Natural killer cell (primary cell): ENCODE measurements at regions of chr21 and their contacts with region 1.

Region 1: DNA sequence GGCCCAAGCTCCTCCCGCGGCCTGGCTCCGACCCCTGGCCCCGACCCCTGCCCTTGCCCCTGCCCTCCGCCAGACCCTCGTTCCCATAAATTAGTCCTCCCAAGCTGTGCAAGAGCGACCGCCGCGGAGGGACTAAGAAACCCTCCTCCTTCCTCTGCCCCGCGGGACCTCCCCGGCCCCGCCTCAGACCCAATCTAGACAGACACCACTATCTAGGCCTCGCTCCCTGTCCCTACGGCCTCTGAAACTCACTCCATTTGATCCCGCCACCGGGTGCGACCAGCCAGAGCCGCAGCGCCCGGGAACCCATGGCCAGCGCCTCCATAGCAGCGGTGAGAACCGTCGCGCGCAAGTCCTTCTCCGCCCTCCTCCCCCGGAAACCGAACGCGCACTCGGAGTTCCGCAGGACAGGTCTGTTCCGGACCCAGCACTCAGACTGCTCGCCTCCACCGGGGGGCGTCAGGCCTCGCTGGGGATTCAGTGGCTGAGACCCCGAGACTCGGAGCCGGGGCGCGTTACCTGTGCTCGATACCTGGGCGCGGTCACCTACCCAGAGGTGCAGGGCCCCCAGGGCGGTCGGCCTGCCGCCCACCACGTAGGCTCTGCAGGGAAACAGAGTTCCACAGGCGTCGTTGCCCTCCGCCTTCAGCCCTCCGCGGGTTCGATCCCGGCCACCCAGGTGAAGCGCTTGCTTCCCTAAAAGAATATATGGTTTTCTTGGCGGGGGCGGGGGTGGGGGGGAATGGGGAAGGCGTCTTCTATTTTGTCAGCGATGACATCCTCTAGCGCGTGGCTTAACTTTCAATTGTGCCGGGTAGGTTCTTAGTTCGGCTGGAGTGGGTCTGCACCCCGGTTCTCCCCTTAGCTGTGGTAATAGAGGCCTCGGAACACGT is at the start of gene MRPL39:
- DNase-seq: peak; percentile 81 to 91
- ATAC-seq: peak; percentile 91 to 94 (median 91)
- H3K4me3 ChIP-seq: peak within 1 kb of the TSS; percentile 95
- H3K4me3 Mint-ChIP-seq: peak within 1 kb of the TSS; percentile 98
- H3K27ac ChIP-seq: peak within 1 kb of the TSS; percentile 84
- H3K27ac Mint-ChIP-seq: peak within 1 kb of the TSS; percentile 91 to 97
- H3K4me1 ChIP-seq: peaks cover 23% of the 10 kb centered on the region
- H3K4me1 Mint-ChIP-seq: peaks cover 23 to 37% of the 10 kb centered on the region in 2 donors
- H3K27me3 ChIP-seq: no peaks in the 10 kb centered on the region
- H3K27me3 Mint-ChIP-seq: no peaks in the 10 kb centered on the region
- CTCF ChIP-seq: no peak
- total RNA-seq, gene MRPL39: 10.8 to 12.8 (median 10.8) TPM

Region 2: GRCh38 chr21:25561668-25562641 is 45.4 kb before region 1 on chr21:
- intact Hi-C with region 1: loop called (anchors 5 kb)
- DNase-seq: peak; percentile 67 to 82
- ATAC-seq: peak; percentile 68 to 81 (median 77)
- H3K4me3 ChIP-seq: peak overlapping the region; percentile 52
- H3K4me3 Mint-ChIP-seq: peak overlapping the region; percentile 97
- H3K27ac ChIP-seq: peak overlapping the region; percentile 52
- H3K27ac Mint-ChIP-seq: peak overlapping the region; percentile 83 to 84
- H3K4me1 ChIP-seq: peaks cover 28% of the 10 kb centered on the region
- H3K4me1 Mint-ChIP-seq: peaks cover 45 to 46% of the 10 kb centered on the region in 2 donors
- H3K27me3 ChIP-seq: no peaks in the 10 kb centered on the region
- H3K27me3 Mint-ChIP-seq: no peaks in the 10 kb centered on the region
- CTCF ChIP-seq: no peak

Region 3: DNA sequence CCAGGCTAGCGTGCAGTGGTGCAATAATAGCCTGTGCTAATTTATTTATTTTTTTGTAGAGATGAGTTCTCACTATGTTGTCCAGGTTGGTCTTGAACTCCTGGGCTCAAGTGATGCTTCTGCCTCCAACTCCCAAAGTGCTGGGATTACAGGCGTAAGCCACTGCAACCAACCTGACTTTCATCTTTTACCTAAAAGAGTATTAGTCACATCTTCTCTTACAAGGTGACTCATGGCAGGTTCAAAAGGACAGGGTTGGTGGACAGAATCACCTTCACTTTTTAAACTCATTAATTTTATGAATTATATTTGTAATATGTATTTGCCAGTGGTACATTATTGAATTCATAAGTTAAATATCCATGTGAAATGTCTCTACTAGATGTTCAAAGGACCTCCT is 49.7 kb after region 1 on chr21:
- intact Hi-C with region 1: no loop called
- DNase-seq: no peak
- ATAC-seq: no peak
- H3K4me3 ChIP-seq: no peak overlapping the region
- H3K4me3 Mint-ChIP-seq: no peak overlapping the region
- H3K27ac ChIP-seq: no peak overlapping the region
- H3K27ac Mint-ChIP-seq: no peak overlapping the region
- H3K4me1 ChIP-seq: no peaks in the 10 kb centered on the region
- H3K4me1 Mint-ChIP-seq: no peaks in the 10 kb centered on the region
- H3K27me3 ChIP-seq: no peaks in the 10 kb centered on the region
- H3K27me3 Mint-ChIP-seq: peaks cover 6 to 8% of the 10 kb centered on the region in 2 donors
- CTCF ChIP-seq: no peak

Region 4: DNA sequence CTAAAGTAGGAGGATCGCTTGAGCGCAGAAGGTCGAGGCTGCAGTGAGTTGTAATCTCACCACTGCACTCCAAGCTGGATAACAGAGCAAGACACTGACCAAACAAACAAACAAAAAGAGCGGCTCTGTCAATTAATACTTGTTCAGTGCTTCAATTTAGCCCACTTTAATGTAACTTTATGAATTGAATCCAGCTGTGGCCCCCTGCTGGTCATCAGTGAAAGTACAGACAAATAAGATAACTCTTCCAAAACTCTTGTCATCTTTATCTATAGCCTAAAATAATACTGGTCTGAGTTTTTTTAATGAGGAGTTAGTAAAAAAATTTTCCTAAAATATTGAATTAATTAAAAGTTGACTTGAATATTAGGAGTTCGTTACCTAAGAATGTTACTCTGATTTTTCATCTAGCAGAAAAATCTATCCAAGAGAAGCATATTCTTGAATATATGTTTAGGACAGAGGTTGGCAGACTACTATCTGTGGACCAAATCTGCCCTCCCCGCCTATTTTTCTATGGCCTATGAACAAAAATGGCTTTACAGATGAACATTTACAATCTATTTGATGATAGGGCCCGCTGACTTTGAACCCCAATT is 101.2 kb after region 1 on chr21:
- intact Hi-C with region 1: loop called (anchors 1 kb)
- DNase-seq: peak; percentile 20 to 78
- ATAC-seq: peak in 2 of 3 donors; percentile 60 to 61
- H3K4me3 ChIP-seq: no peak overlapping the region
- H3K4me3 Mint-ChIP-seq: no peak overlapping the region
- H3K27ac ChIP-seq: no peak overlapping the region
- H3K27ac Mint-ChIP-seq: no peak overlapping the region
- H3K4me1 ChIP-seq: no peaks in the 10 kb centered on the region
- H3K4me1 Mint-ChIP-seq: no peaks in the 10 kb centered on the region
- H3K27me3 ChIP-seq: no peaks in the 10 kb centered on the region
- H3K27me3 Mint-ChIP-seq: no peaks in the 10 kb centered on the region
- CTCF ChIP-seq: peak; percentile 96

Region 5: DNA sequence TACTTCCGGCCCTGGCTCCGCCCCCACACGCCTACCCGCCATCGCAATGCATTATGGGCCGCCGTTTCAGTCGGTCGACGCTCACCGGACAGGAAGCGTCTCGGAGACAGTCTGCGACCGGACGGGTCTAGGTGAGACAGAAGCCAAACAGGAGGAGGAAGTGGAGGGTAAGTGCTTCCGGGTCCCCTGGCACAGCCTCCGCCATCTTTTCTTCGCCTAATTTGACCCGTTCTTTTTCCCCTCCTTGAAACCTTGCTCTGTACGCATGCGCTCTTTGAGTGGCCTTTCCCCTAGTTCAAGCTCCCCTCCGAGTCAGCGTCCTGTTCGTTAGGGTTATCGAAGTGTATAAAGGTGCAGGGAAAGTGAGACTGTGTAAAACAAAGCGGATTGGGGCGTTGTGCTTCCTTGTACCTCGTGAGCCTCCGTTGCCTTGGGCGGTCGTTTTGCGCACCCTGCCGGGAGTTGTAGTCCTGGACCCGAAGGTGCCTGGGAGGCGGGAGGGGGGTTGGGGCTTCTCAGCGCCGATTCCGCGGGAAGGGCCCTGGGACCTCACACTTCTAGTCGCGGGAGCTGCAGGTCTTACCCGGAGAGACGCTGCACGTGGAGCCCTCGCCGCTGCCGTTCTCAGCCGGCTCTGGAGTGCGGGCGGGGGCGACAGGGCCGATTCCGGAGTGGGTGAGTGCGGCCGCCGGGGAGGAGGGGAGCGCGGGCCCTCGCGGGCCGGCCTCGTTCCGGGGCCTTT is 127.7 kb after region 1 on chr21 and contains the starts of genes ATP5PF and GABPA:
- intact Hi-C with region 1: loop called (anchors 1 kb)
- DNase-seq: peak; percentile 98 to 99
- ATAC-seq: peak; percentile 86 to 98 (median 89)
- H3K4me3 ChIP-seq: peak within 1 kb of the TSS; percentile 79
- H3K4me3 Mint-ChIP-seq: peak within 1 kb of the TSS; percentile 100
- H3K27ac ChIP-seq: peak within 1 kb of the TSS; percentile 92
- H3K27ac Mint-ChIP-seq: peak within 1 kb of the TSS; percentile 93 to 100
- H3K4me1 ChIP-seq: peaks cover 4% of the 10 kb centered on the region
- H3K4me1 Mint-ChIP-seq: peaks cover 39 to 44% of the 10 kb centered on the region in 2 donors
- H3K27me3 ChIP-seq: no peaks in the 10 kb centered on the region
- H3K27me3 Mint-ChIP-seq: no peaks in the 10 kb centered on the region
- CTCF ChIP-seq: no peak
- total RNA-seq, gene ATP5PF: 36.2 to 41.6 (median 36.4) TPM
- total RNA-seq, gene GABPA: 25.2 to 29.3 (median 27.7) TPM

Region 6: DNA sequence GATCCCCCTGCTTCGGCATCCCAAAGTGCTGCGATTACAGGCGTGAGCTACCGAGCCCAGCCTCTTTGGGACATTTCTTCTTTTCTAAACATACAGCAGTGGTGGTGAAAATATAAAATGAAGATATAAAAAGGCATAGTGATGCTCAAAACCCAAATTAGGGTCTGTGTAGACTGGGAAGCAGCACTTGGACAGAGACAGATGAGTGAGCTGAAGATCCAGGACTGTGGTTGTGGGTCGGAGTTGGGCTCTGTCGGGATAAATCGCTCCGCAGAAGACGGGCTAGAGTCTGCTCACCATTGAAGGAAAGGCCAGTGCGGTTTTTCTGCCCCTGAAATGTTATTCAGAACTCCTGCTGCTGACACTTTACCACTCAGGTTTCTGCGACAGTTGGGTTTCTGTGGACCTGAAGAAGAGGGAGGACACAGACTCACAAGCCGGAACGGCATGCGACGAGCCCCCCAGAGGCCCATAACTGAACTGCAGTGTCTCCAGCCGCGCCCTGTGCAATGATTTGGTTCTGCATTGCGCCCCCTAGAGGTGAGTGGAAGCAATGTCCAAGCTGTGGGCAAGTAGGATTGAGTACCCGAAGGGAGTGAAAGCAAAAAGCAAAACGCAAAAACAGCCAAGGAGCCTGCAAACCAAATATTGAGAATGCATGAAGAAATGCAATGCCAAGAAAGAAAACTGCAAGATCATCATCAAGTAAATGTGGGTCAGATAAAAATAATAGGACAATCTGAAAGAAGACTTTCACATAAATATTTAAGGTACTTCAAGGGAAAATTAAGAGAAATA is 194.0 kb after region 1 on chr21:
- intact Hi-C with region 1: no loop called
- DNase-seq: peak; percentile 62 to 92
- ATAC-seq: peak; percentile 98 to 100 (median 99)
- H3K4me3 ChIP-seq: no peak overlapping the region
- H3K4me3 Mint-ChIP-seq: peak overlapping the region; percentile 49
- H3K27ac ChIP-seq: no peak overlapping the region
- H3K27ac Mint-ChIP-seq: peak overlapping the region in 1 of 2 donors; percentile 39
- H3K4me1 ChIP-seq: peaks cover 3% of the 10 kb centered on the region
- H3K4me1 Mint-ChIP-seq: peaks cover 6 to 8% of the 10 kb centered on the region in 2 donors
- H3K27me3 ChIP-seq: no peaks in the 10 kb centered on the region
- H3K27me3 Mint-ChIP-seq: peaks cover 4 to 18% of the 10 kb centered on the region in 2 donors
- CTCF ChIP-seq: peak; percentile 93

Region 7: GRCh38 chr21:25862596-25862995 is 255.2 kb after region 1 on chr21:
- intact Hi-C with region 1: loop called (anchors 5 kb)
- DNase-seq: peak in 1 of 2 donors; percentile 53
- ATAC-seq: peak in 1 of 3 donors; percentile 43
- H3K4me3 ChIP-seq: no peak overlapping the region
- H3K4me3 Mint-ChIP-seq: no peak overlapping the region
- H3K27ac ChIP-seq: no peak overlapping the region
- H3K27ac Mint-ChIP-seq: no peak overlapping the region
- H3K4me1 ChIP-seq: no peaks in the 10 kb centered on the region
- H3K4me1 Mint-ChIP-seq: no peaks in the 10 kb centered on the region
- H3K27me3 ChIP-seq: no peaks in the 10 kb centered on the region
- H3K27me3 Mint-ChIP-seq: peaks cover 6 to 14% of the 10 kb centered on the region in 2 donors
- CTCF ChIP-seq: peak; percentile 63

Region 8: GRCh38 chr21:26715878-26716506 is 1108.6 kb after region 1 on chr21:
- intact Hi-C with region 1: loop called (anchors 1 kb)
- DNase-seq: peak in 1 of 2 donors; percentile 50
- ATAC-seq: peak in 1 of 3 donors; percentile 53
- H3K4me3 ChIP-seq: no peak overlapping the region
- H3K4me3 Mint-ChIP-seq: no peak overlapping the region
- H3K27ac ChIP-seq: no peak overlapping the region
- H3K27ac Mint-ChIP-seq: no peak overlapping the region
- H3K4me1 ChIP-seq: no peaks in the 10 kb centered on the region
- H3K4me1 Mint-ChIP-seq: no peaks in the 10 kb centered on the region
- H3K27me3 ChIP-seq: no peaks in the 10 kb centered on the region
- H3K27me3 Mint-ChIP-seq: no peaks in the 10 kb centered on the region
- CTCF ChIP-seq: peak; percentile 65